Activated T-helper 1 cell treated with anti-CD3 and anti-CD28 coated beads, Interleukin-12 subunit alpha, Interleukin-12 subunit beta, Interleukin-2, Interleukin-4 antibody, amounts not matched to agents 30 ng/mL and 10 ng/mL and 1 ng/mL, durations not matched to agents 14 hours and 24 hours and 36 hours (primary cell): ENCODE measurements at regions of chr2 and their contacts with region 1.

Region 1: GRCh38 chr2:97688062-97688827 is 18.7 kb downstream of the C2orf92 start:
- DNase-seq: no peak
- H3K4me3 Mint-ChIP-seq: no peak overlapping the region
- H3K27ac Mint-ChIP-seq: peak overlapping the region; percentile 57
- H3K4me1 Mint-ChIP-seq: peaks cover 13% of the 10 kb centered on the region
- H3K27me3 Mint-ChIP-seq: no peaks in the 10 kb centered on the region

Region 2: DNA sequence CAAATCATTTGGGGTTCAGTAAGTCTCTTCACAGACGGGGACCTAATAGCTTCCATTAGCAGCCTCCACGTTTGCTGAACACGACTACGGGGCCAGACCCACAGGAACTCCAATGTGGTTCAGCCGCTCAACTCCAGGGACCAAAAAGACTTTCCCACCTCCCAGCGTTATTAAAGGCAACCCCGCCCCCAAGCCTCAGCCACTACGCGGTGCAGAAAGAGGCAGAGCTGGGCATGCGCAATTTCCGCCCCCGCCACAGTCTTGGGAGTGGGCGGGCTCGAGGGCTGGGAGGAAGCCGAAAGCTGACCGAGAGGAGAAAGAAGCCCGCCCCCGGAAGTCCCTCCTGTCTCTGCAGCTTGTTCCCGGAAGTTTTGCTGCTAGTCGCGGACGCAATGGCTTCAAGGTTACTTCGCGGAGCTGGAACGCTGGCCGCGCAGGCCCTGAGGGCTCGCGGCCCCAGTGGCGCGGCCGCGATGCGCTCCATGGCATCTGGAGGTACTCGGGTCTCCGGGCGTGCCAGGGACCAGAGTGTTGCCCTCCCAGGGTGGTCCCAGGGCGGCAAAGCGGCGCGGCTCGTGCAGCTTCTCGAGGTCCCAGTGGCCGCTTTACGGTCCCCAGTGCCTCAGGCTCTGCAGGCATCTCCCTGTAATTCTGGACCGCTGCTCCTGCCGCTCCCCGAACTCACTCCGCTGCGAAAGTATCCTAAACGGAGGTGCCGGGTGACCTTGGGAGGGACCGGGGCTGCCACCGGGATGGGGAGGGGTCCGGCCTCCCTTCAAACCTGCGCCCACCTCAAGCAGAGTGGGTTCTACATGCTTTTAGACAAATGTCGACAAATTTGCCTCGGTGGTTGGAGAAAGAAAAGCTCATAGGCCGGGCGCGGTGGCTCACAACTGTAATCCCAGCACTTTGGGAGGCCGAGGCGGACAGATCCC is 42.3 kb before region 1 on chr2 and contains the start of gene COX5B:
- intact Hi-C with region 1: loop called (anchors 2 kb)
- DNase-seq: peak; percentile 99
- H3K4me3 Mint-ChIP-seq: peak within 1 kb of the TSS; percentile 86
- H3K27ac Mint-ChIP-seq: peak within 1 kb of the TSS; percentile 97
- H3K4me1 Mint-ChIP-seq: peaks cover 29% of the 10 kb centered on the region
- H3K27me3 Mint-ChIP-seq: peaks cover 3% of the 10 kb centered on the region
- total RNA-seq, gene COX5B: 228 and 241 TPM in 2 replicates

Region 3: GRCh38 chr2:97656905-97657587 is 31.2 kb before region 1 on chr2:
- intact Hi-C with region 1: no loop called
- DNase-seq: no peak
- H3K4me3 Mint-ChIP-seq: no peak overlapping the region
- H3K27ac Mint-ChIP-seq: no peak overlapping the region
- H3K4me1 Mint-ChIP-seq: peaks cover 32% of the 10 kb centered on the region
- H3K27me3 Mint-ChIP-seq: no peaks in the 10 kb centered on the region